Activated CD4-positive, alpha-beta memory T cell treated with anti-CD3 and anti-CD28 coated beads for 36 hours (primary cell): ENCODE measurements at regions of chr19 and their contacts with region 1.

Region 1: DNA sequence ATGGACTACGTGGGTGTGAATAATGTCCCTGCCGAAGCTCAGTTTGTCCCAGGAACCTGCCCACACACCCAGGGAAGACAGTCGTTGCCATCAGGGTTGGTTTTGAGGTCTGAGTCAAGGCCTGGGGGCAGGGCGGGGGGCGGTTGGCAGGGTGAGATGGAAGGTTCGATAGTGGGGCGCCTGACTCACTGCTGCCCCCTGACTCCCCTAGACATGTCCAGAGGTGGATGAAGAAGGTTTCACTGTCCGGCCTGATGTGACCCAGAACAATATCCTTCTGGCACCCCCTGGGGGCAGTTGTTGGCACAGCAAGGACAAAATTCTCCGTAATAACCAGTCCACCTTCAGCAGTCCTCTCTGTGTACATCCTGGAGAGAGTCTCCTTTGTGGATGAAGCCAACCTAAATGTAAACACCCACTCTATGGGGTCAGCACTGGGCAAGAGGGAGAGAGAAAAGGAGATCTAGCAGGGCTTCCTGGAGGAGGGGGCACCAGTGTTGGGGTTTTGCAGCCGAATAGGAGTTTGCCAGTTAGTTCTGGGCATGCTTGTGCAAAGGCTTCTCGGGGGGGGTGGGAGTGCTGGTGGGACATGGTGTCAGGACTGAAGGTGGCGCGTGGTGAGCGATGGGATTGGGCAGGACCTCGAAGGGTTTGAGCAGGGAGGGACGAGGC is 19.6 kb upstream of the B3GNT3 start:
- DNase-seq: peak; percentile 52
- H3K4me3 Mint-ChIP-seq: no peak overlapping the region
- H3K27ac Mint-ChIP-seq: no peak overlapping the region
- H3K4me1 Mint-ChIP-seq: peaks cover 8% of the 10 kb centered on the region
- H3K27me3 Mint-ChIP-seq: no peaks in the 10 kb centered on the region

Region 2: GRCh38 chr19:17703824-17704463 is 71.4 kb before region 1 on chr19:
- CTCF ChIA-PET with region 1: interaction called, 31 read pairs
- POLR2A ChIA-PET with region 1: no interaction called
- intact Hi-C with region 1: no loop called
- DNase-seq: peak; percentile 81
- H3K4me3 Mint-ChIP-seq: no peak overlapping the region
- H3K27ac Mint-ChIP-seq: no peak overlapping the region
- H3K4me1 Mint-ChIP-seq: no peaks in the 10 kb centered on the region
- H3K27me3 Mint-ChIP-seq: peaks cover 4% of the 10 kb centered on the region

Region 3: DNA sequence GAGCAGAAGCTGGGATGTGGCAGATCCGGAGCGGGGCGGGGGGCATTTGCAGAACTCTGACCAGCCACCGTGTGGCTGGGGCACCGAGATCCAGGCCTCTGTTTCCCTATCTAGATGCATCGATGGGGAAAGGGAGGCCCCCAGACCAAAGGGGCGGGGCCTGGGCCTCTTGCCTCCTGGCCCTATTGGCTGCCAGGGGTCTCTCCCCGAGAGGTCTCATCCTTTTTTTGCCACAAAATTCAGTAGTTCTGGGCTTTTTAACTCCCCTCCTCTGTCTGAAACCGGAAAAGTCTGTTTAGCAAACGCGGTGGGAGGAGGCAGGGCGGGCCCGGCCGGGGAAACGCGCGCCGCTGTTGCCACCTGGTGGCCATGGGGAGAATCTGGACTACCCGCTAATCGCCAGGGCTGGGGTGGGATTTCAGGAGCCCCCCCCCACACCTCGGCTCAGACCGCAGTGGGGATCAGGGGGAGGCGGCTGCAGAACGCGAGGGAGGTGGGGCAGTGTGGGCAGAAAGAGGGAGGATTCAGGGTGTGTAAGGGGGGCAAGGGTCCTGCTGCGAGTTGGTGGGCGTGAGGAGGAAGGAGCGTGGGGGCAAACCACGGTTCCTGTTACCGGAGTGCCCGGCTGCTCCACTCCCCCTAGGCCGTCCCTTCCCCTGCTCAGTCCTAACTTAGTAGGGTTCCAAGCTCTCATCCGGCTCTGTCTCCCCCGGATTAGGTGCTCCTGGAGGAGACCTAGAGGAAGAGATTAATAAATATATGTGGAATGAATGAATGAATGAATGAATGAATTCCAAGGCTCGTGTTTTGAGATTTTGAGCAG is 283.0 kb after region 1 on chr19:
- CTCF ChIA-PET with region 1: no interaction called
- POLR2A ChIA-PET with region 1: no interaction called
- intact Hi-C with region 1: no loop called
- DNase-seq: peak; percentile 87
- H3K4me3 Mint-ChIP-seq: peak overlapping the region; percentile 29
- H3K27ac Mint-ChIP-seq: peak overlapping the region; percentile 58
- H3K4me1 Mint-ChIP-seq: peaks cover 14% of the 10 kb centered on the region
- H3K27me3 Mint-ChIP-seq: no peaks in the 10 kb centered on the region